ENCODE measurements at regions of chr13 and their contacts with region 1.

Region 1: GRCh38 chr13:50319635-50320255 is 304.5 kb downstream of the KCNRG start:
- DNase-seq: no peak
- H3K4me3 ChIP-seq: no peak overlapping the region
- H3K4me3 Mint-ChIP-seq: no peak overlapping the region
- H3K27ac ChIP-seq: no peak overlapping the region
- H3K27ac Mint-ChIP-seq: peak overlapping the region in 1 of 7 donors; percentile 12
- H3K4me1 ChIP-seq: peaks cover 0 to 5% of the 10 kb centered on the region in 2 donors
- H3K4me1 Mint-ChIP-seq: peaks cover 10% of the 10 kb centered on the region
- H3K27me3 ChIP-seq: no peaks in the 10 kb centered on the region
- H3K27me3 Mint-ChIP-seq: peaks cover 0 to 2% (median 0%) of the 10 kb centered on the region in 3 donors
- CTCF ChIP-seq: no peak

Region 2: GRCh38 chr13:50457415-50458393 is 138.0 kb after region 1 on chr13:
- intact Hi-C with region 1: loop called in 1 of 2 experiments (anchors 10 kb)
- DNase-seq: peak; percentile 64 to 81 (median 64)
- H3K4me3 ChIP-seq: no peak overlapping the region
- H3K4me3 Mint-ChIP-seq: no peak overlapping the region
- H3K27ac ChIP-seq: no peak overlapping the region
- H3K27ac Mint-ChIP-seq: peak overlapping the region in 2 of 7 donors; percentile 48 to 81
- H3K4me1 ChIP-seq: peaks cover 6 to 8% of the 10 kb centered on the region in 2 donors
- H3K4me1 Mint-ChIP-seq: peaks cover 11% of the 10 kb centered on the region
- H3K27me3 ChIP-seq: no peaks in the 10 kb centered on the region
- H3K27me3 Mint-ChIP-seq: peaks cover 0 to 2% (median 0%) of the 10 kb centered on the region in 3 donors
- CTCF ChIP-seq: no peak

Region 3: GRCh38 chr13:50529154-50529882 is 209.6 kb after region 1 on chr13:
- intact Hi-C with region 1: loop called in 1 of 2 experiments (anchors 10 kb)
- DNase-seq: no peak
- H3K4me3 ChIP-seq: no peak overlapping the region
- H3K4me3 Mint-ChIP-seq: no peak overlapping the region
- H3K27ac ChIP-seq: no peak overlapping the region
- H3K27ac Mint-ChIP-seq: peak overlapping the region in 2 of 7 donors; percentile 61 to 67
- H3K4me1 ChIP-seq: peaks cover 19 to 32% of the 10 kb centered on the region in 2 donors
- H3K4me1 Mint-ChIP-seq: peaks cover 36% of the 10 kb centered on the region
- H3K27me3 ChIP-seq: no peaks in the 10 kb centered on the region
- H3K27me3 Mint-ChIP-seq: peaks cover 0 to 2% (median 0%) of the 10 kb centered on the region in 3 donors
- CTCF ChIP-seq: no peak

Measured in CD14-positive monocyte (primary cell).